K562 (cell line): ENCODE measurements at regions of chr9 and their contacts with region 1.

Region 1: GRCh38 chr9:87516222-87516925 is 18.7 kb downstream of the DAPK1 start:
- DNase-seq: peak; percentile 49 to 91 (median 66)
- ATAC-seq: peak; percentile 84
- H3K4me3 ChIP-seq: no peak overlapping the region
- H3K27ac ChIP-seq: peak overlapping the region; percentile 84; the same call in 2 of the 3 replicates
- H3K4me1 ChIP-seq: peaks cover 35 to 64% of the 10 kb centered on the region in 2 experiments
- H3K27me3 ChIP-seq: no peaks in the 10 kb centered on the region
- CTCF ChIP-seq: no peak
- EP300 ChIP-seq: peak; percentile 89
- POLR2A ChIP-seq: no peak
- RAD21 ChIP-seq: peak in 1 of 2 experiments; percentile 22; a peak in 2 of 4 replicates

Region 2: GRCh38 chr9:86766912-86767311 is 749.5 kb before region 1 on chr9:
- CTCF ChIA-PET with region 1: no interaction called
- POLR2A ChIA-PET with region 1: no interaction called
- in situ Hi-C with region 1: no loop called
- intact Hi-C with region 1: no loop called
- DNase-seq: no peak
- ATAC-seq: no peak
- H3K4me3 ChIP-seq: no peak overlapping the region
- H3K27ac ChIP-seq: no peak overlapping the region
- H3K4me1 ChIP-seq: no peaks in the 10 kb centered on the region
- H3K27me3 ChIP-seq: peaks cover 0 to 8% of the 10 kb centered on the region in 2 experiments; a peak in 2 of 5 replicates
- CTCF ChIP-seq: no peak
- EP300 ChIP-seq: no peak
- POLR2A ChIP-seq: no peak
- RAD21 ChIP-seq: no peak

Region 3: GRCh38 chr9:87405677-87406542 is 110.5 kb before region 1 on chr9:
- CTCF ChIA-PET with region 1: no interaction called
- POLR2A ChIA-PET with region 1: no interaction called
- in situ Hi-C with region 1: no loop called
- intact Hi-C with region 1: loop called (anchors 5 kb)
- DNase-seq: no peak
- ATAC-seq: no peak
- H3K4me3 ChIP-seq: no peak overlapping the region
- H3K27ac ChIP-seq: no peak overlapping the region
- H3K4me1 ChIP-seq: peaks cover 0 to 5% of the 10 kb centered on the region in 2 experiments; a peak in 3 of 5 replicates
- H3K27me3 ChIP-seq: no peaks in the 10 kb centered on the region
- CTCF ChIP-seq: no peak
- EP300 ChIP-seq: no peak
- POLR2A ChIP-seq: no peak
- RAD21 ChIP-seq: no peak

Region 4: DNA sequence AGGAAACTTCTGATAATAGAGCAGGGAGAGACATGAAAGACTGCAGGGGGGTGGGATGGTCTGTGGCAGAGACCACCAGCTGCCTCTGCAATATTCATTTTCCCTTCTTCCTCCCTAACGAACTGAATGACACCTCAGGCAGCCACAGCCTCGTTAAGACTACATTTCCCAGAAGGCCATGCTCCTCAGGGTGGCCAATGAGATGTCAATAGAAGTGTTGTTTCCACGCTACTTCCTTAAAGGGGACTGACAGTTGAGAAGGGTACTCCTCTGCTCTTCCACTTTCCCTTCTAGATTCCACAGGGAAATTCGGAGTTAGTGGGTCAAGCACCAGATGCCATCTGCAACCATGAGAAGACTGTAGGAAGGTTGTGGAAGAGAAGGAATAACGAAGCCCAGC is 70.7 kb before region 1 on chr9:
- CTCF ChIA-PET with region 1: no interaction called
- POLR2A ChIA-PET with region 1: no interaction called
- in situ Hi-C with region 1: no loop called
- intact Hi-C with region 1: no loop called
- DNase-seq: peak; percentile 45 to 74 (median 60)
- ATAC-seq: peak; percentile 99
- H3K4me3 ChIP-seq: peak overlapping the region; percentile 26
- H3K27ac ChIP-seq: peak overlapping the region; percentile 68; the same call in 2 of the 3 replicates
- H3K4me1 ChIP-seq: peaks cover 0 to 10% of the 10 kb centered on the region in 2 experiments; a peak in 2 of 5 replicates
- H3K27me3 ChIP-seq: no peaks in the 10 kb centered on the region
- CTCF ChIP-seq: no peak
- EP300 ChIP-seq: no peak
- POLR2A ChIP-seq: no peak
- RAD21 ChIP-seq: no peak

Region 5: GRCh38 chr9:87529671-87530070 is 13.3 kb after region 1 on chr9:
- CTCF ChIA-PET with region 1: no interaction called
- POLR2A ChIA-PET with region 1: interaction called, 11 read pairs
- in situ Hi-C with region 1: no loop called
- intact Hi-C with region 1: no loop called
- DNase-seq: no peak
- ATAC-seq: no peak; the same call in 2 of the 3 replicates
- H3K4me3 ChIP-seq: no peak overlapping the region
- H3K27ac ChIP-seq: no peak overlapping the region
- H3K4me1 ChIP-seq: peaks cover 4 to 8% of the 10 kb centered on the region in 2 experiments; a peak in 2 of 5 replicates
- H3K27me3 ChIP-seq: no peaks in the 10 kb centered on the region
- CTCF ChIP-seq: no peak
- EP300 ChIP-seq: no peak
- POLR2A ChIP-seq: no peak
- RAD21 ChIP-seq: no peak

Region 6: DNA sequence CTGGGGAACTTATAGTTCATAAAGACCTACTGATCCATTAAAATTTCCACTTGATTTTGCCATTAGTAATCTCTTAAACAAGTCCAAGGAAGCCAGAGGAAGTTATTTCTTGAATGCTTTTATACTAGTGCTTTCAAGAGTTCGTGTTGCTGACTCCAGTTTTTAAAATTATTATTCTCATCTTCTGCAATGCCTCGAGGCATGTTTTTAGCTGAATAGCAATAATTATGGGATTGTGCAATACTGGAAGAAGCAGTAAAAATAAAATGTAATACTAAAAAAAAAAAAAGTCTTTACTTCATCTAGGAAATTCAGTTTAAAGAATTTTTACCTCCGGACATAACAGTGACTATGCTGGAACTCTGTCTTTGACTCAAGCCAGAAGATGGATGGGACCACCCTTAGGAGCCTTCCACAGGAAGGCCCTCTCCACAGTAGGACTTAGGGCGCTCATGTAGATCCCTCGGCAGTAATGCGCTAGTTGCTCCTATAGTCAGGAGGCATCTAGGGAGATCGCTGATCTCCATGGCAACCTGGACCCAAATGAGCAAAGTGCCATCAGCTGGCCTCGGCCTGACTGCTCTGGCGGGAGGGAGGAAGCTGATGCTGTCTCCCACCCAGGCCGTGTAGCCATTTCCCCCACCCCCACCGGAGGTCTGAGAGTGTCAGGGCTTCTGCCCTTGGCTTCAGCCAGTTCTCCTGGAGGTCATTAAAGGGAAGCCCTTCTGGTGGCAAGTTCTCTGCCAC is 38.0 kb after region 1 on chr9:
- CTCF ChIA-PET with region 1: no interaction called
- POLR2A ChIA-PET with region 1: no interaction called
- in situ Hi-C with region 1: no loop called
- intact Hi-C with region 1: loop called (anchors 5 kb)
- DNase-seq: no peak
- ATAC-seq: no peak
- H3K4me3 ChIP-seq: no peak overlapping the region
- H3K27ac ChIP-seq: no peak overlapping the region
- H3K4me1 ChIP-seq: peaks cover 16 to 22% of the 10 kb centered on the region in 2 experiments; a peak in 4 of 5 replicates
- H3K27me3 ChIP-seq: no peaks in the 10 kb centered on the region
- CTCF ChIP-seq: no peak
- EP300 ChIP-seq: no peak
- POLR2A ChIP-seq: no peak
- RAD21 ChIP-seq: no peak